Right ventricle myocardium superior (tissue), 1 donor: ENCODE measurements at regions of chr17 and their contacts with region 1.

Region 1: GRCh38 chr17:76121932-76122430 is 18.4 kb upstream of the EXOC7 start:
- DNase-seq: no peak
- ATAC-seq: peak; percentile 54

Region 2: GRCh38 chr17:76182016-76182764 is 60.2 kb after region 1 on chr17:
- intact Hi-C with region 1: loop called (anchors 5 kb)
- DNase-seq: peak; percentile 92
- ATAC-seq: peak; percentile 93

Region 3: GRCh38 chr17:76278952-76279741 is 157.2 kb after region 1 on chr17:
- intact Hi-C with region 1: loop called (anchors 2 kb)
- DNase-seq: peak; percentile 94
- ATAC-seq: peak; percentile 91

Region 4: DNA sequence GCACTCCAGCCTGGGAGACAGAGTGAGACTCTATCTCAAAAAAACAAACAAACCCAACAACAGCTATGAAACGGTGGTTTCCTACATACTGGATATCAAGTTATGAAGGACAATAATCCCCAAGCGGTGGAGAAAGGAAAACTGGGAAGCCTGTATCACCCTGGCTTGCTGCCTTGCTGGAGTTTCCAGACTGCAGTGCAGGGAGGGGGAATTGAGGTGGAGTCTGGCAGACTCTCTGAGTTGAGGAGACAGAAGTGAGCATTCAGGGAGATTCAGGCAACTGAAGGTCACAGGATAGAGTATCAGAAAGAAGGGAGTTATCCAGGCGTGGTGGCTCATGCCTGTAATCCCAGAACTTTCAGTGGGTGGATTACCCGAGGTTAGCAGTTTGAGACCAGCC is 174.2 kb after region 1 on chr17:
- intact Hi-C with region 1: loop called (anchors 5 kb)
- DNase-seq: no peak
- ATAC-seq: peak; percentile 76